Stomach (tissue), 19 donors: ENCODE measurements at regions of chr9 and their contacts with region 1.

Region 1: GRCh38 chr9:94061864-94062263 is 22.4 kb upstream of the PTPDC1 start:
- DNase-seq: no peak
- H3K4me3 ChIP-seq: no peak overlapping the region
- H3K27ac ChIP-seq: no peak overlapping the region
- H3K4me1 ChIP-seq: peaks cover 5 to 28% (median 8%) of the 10 kb centered on the region in 4 donors
- H3K27me3 ChIP-seq: no peaks in the 10 kb centered on the region
- CTCF ChIP-seq: no peak
- EP300 ChIP-seq: no peak
- POLR2A ChIP-seq: no peak

Region 2: GRCh38 chr9:94030318-94031179 is 31.3 kb before region 1 on chr9:
- intact Hi-C with region 1: no loop called
- DNase-seq: peak; percentile 87 to 97
- H3K4me3 ChIP-seq: peak overlapping the region; percentile 77 to 86 (median 82)
- H3K27ac ChIP-seq: peak overlapping the region; percentile 84 to 94 (median 91)
- H3K4me1 ChIP-seq: peaks cover 10 to 26% (median 15%) of the 10 kb centered on the region in 4 donors
- H3K27me3 ChIP-seq: no peaks in the 10 kb centered on the region
- CTCF ChIP-seq: no peak
- EP300 ChIP-seq: no peak
- POLR2A ChIP-seq: peak in 1 of 4 donors; percentile 24

Region 3: DNA sequence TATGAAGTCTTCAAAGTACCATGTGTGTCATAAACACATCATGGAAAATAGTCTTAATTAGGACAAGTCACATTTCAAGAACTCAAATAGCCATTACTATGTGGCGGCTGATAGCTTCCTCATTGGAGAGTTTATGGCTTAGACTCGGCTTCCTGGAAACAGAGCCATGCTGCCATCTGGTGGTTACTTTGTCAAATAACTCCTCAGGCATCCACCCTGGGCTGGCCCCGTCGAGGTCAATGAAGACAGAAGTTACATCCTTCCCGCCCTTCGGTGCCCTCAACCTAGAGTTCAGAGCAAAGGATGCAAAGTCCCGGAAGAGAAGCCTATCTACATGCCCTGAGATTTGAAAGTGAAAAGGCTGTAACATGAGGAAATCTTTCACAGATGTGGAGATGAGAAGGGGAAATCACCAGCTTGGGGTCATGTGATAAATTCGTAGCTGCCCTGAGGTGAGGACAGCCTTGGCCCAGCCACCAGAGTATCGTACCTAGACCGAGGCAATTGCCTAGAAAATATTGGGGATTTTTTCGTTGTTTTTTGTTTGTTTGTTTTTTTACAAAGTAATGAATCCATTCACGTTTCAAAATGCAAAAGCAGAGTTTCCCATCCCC is 151.8 kb after region 1 on chr9:
- intact Hi-C with region 1: loop called (anchors 5 kb)
- DNase-seq: peak; percentile 77 to 94
- H3K4me3 ChIP-seq: no peak overlapping the region
- H3K27ac ChIP-seq: no peak overlapping the region
- H3K4me1 ChIP-seq: peaks cover 0 to 9% (median 2%) of the 10 kb centered on the region in 4 donors
- H3K27me3 ChIP-seq: peaks cover 0 to 6% (median 0%) of the 10 kb centered on the region in 3 donors
- CTCF ChIP-seq: peak in 5 of 7 experiments; percentile 65 to 90 (median 87)
- EP300 ChIP-seq: no peak
- POLR2A ChIP-seq: no peak